Activated B cell treated with CpG ODN at 0.5 μM for 24 hours (primary cell): ENCODE measurements at regions of chr5 and their contacts with region 1.

Region 1: DNA sequence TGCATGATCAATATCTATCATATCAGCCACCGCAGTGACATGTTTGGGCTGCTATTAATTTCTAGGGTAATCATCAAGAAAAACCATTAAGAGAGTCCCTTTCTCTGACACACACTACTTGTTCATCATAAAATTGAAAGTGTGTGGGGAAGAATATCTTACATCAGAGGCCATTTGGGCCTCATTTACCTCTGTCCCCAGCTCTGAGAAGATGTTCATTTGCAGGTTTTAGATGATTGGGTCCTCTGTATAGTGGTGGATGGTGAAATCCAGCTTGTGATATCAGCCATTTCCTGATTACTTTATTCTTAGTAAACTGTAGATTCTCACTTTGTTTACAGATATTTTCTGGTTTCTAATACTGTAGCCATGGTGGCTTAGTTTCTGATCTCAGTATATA is 29.8 kb upstream of the PJA2 start:
- DNase-seq: no peak
- ATAC-seq: no peak
- H3K4me3 Mint-ChIP-seq: no peak overlapping the region
- H3K27ac Mint-ChIP-seq: no peak overlapping the region
- H3K4me1 Mint-ChIP-seq: no peaks in the 10 kb centered on the region
- H3K27me3 Mint-ChIP-seq: no peaks in the 10 kb centered on the region
- CTCF ChIP-seq: no peak

Region 2: GRCh38 chr5:108521841-108522506 is 917.6 kb before region 1 on chr5:
- CTCF ChIA-PET with region 1: no interaction called
- POLR2A ChIA-PET with region 1: no interaction called
- intact Hi-C with region 1: loop called (anchors 1 kb)
- DNase-seq: no peak
- ATAC-seq: peak; percentile 49
- H3K4me3 Mint-ChIP-seq: no peak overlapping the region
- H3K27ac Mint-ChIP-seq: no peak overlapping the region
- H3K4me1 Mint-ChIP-seq: peaks cover 31% of the 10 kb centered on the region
- H3K27me3 Mint-ChIP-seq: peaks cover 4% of the 10 kb centered on the region
- CTCF ChIP-seq: no peak

Region 3: DNA sequence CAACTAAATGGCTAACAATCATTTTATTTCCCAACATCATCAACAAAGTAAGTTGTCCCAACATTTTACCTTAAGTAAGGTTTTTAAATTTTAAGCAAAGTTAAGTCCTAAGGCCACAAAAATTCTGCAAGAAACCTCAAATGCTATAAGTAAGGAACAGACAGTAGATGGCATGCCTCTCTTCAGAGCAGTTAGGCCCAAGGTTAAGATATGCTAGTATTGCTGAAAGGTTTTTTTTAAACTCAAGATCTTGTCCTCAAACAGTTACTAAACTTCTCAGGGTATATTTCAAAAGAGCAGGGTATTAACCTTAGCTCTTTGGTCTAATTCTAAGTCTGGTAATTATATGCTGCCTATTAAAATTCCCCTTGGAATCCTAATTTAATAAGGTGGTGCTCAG is 65.0 kb before region 1 on chr5:
- CTCF ChIA-PET with region 1: no interaction called
- POLR2A ChIA-PET with region 1: no interaction called
- intact Hi-C with region 1: loop called (anchors 2 kb)
- DNase-seq: no peak
- ATAC-seq: no peak
- H3K4me3 Mint-ChIP-seq: no peak overlapping the region
- H3K27ac Mint-ChIP-seq: no peak overlapping the region
- H3K4me1 Mint-ChIP-seq: peaks cover 14% of the 10 kb centered on the region
- H3K27me3 Mint-ChIP-seq: no peaks in the 10 kb centered on the region
- CTCF ChIP-seq: no peak